G401 (cell line): ENCODE measurements at regions of chr3 and their contacts with region 1.

Region 1: GRCh38 chr3:129119365-129120100 is 2.1 kb downstream of the RAB43 start:
- DNase-seq: peak; percentile 83

Region 2: GRCh38 chr3:129058441-129059200 is 60.9 kb before region 1 on chr3:
- in situ Hi-C with region 1: loop called (anchors 10 kb)
- DNase-seq: peak; percentile 82

Region 3: DNA sequence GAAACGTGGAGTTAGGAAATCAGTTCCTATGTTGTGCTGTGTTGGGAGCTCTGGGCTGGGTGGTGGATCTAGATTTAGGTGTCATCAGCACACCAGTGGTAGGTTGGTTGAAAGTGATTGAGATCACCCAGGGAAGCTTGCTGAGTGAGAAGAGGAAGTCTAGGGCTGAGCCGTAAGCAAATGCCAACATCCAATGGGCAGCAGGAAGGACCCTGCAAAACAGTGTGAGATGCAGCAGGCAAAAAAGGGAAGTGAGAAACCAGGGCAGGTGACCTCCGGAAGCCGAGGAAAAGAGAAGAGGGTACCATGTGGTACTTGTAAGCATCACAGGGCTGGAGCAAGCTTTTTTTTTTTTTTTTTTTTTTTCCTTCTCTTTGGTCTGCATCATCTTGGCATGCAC is 114.0 kb after region 1 on chr3:
- in situ Hi-C with region 1: no loop called
- DNase-seq: no peak